B cell (primary cell): ENCODE measurements at regions of chr3 and their contacts with region 1.

Region 1: GRCh38 chr3:50235716-50236496 is at the start of gene GNAI2:
- DNase-seq: peak; percentile 99
- ATAC-seq: peak; percentile 88
- H3K4me3 ChIP-seq: peak within 1 kb of the TSS; percentile 70 to 100 (median 95)
- H3K4me3 Mint-ChIP-seq: peak within 1 kb of the TSS; percentile 97
- H3K27ac ChIP-seq: peak within 1 kb of the TSS; percentile 65 to 91
- H3K27ac Mint-ChIP-seq: peak within 1 kb of the TSS; percentile 97
- H3K4me1 ChIP-seq: peaks cover 39 to 46% of the 10 kb centered on the region in 2 donors
- H3K4me1 Mint-ChIP-seq: peaks cover 54% of the 10 kb centered on the region
- H3K27me3 ChIP-seq: no peaks in the 10 kb centered on the region
- H3K27me3 Mint-ChIP-seq: no peaks in the 10 kb centered on the region
- CTCF ChIP-seq: no peak
- total RNA-seq, gene GNAI2: 295 and 302 TPM in 2 replicates

Region 2: DNA sequence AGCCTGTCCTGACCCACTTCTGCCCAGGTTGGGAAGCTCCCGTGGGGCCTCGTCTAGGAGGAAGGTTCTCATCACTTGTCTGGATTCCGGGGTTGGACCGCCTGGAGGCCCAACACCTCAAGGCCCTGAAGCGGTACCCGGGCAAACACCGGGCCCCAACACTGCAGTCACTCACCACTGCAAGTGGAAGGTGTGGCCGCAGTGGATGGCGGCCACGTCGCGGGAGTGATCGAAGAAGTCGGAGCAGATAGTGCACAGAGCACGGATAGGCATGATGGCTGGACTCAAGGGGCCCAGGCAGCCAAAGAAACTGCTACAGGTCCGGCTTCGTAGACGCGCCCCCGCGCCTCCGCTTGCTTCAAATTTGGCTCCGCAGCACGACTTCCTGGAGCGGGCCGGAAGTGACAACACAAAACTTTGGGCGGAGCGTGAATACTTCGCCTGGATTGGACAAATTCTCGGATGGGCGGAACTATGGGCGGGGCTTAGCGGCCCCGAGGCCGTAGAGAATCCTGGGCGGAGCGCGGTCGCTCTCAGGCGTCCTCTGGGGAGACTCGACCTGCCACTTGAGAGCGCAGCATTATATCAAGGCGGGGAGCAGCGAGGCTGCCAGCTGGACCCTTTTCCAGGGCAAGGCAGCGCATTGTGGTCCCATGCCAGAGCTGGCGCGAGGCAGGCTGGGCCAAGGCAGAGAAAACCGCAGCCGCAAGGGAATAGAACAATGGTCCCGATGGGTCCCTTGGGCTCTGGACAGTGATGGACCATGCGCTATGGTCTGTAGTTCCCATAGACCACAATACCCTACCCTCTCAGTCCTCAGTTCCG is 379.5 kb before region 1 on chr3 and contains the start of gene TRAIP:
- CTCF ChIA-PET with region 1: no interaction called
- POLR2A ChIA-PET with region 1: no interaction called
- intact Hi-C with region 1: loop called (anchors 2 kb)
- DNase-seq: peak; percentile 98
- ATAC-seq: peak; percentile 100
- H3K4me3 ChIP-seq: peak within 1 kb of the TSS; percentile 53 to 91 (median 69)
- H3K4me3 Mint-ChIP-seq: peak within 1 kb of the TSS; percentile 91
- H3K27ac ChIP-seq: peak within 1 kb of the TSS; percentile 56 to 59
- H3K27ac Mint-ChIP-seq: peak within 1 kb of the TSS; percentile 90
- H3K4me1 ChIP-seq: peaks cover 10 to 15% of the 10 kb centered on the region in 2 donors
- H3K4me1 Mint-ChIP-seq: peaks cover 11% of the 10 kb centered on the region
- H3K27me3 ChIP-seq: peaks cover 0 to 3% (median 0%) of the 10 kb centered on the region in 4 experiments
- H3K27me3 Mint-ChIP-seq: no peaks in the 10 kb centered on the region
- CTCF ChIP-seq: no peak
- total RNA-seq, gene TRAIP: 8.7 and 9.9 TPM in 2 replicates

Region 3: DNA sequence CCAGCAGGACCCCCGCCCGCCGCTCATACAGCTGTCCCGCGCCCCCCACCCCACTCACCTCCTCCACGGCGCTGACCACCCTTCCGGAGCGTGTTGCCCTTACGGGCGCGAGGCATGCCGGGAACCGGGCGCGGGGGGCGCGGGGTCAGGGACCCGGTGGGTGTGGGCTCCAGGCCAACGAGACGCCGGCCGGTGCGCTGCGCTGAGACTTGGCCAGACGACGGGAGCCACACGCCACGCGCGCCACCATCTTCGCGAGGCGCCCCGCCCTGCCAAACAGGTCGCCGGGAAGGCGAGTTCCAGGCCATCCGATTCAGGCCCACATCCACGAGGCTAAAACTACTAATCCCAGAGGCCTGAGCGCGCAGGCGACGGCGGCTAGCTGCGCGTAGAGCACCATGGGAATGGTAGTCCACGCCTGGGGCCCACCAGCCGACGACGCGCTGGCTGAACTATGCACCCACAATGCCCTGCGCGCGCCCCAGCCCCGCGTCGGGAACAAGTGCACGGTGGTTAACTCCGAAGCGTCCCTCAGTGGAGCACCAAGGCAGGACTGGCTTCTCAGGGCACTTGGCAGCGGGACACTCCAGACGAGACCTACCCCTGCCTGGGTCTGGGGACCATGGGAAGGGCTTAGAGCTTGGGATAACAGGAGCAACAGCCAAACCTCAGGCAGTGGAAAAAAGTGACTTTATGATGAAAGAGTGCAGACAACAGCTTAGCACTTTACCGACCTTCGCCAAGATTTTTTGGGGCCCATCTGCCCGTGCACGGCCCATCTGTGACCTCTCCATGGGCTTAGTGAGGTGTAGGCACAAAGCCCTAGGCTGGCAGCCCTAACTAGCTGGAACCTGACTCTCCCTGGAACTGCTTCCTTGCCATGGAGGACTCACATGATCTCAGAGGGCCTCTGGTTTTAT is 56.5 kb after region 1 on chr3 and contains the start of gene IFRD2:
- CTCF ChIA-PET with region 1: interaction called, 3 read pairs
- POLR2A ChIA-PET with region 1: interaction called, 5 read pairs
- intact Hi-C with region 1: loop called (anchors 1 kb)
- DNase-seq: peak; percentile 97
- ATAC-seq: peak; percentile 99
- H3K4me3 ChIP-seq: peak within 1 kb of the TSS; percentile 56 to 94 (median 81)
- H3K4me3 Mint-ChIP-seq: peak within 1 kb of the TSS; percentile 92
- H3K27ac ChIP-seq: peak within 1 kb of the TSS; percentile 57 to 85
- H3K27ac Mint-ChIP-seq: peak within 1 kb of the TSS; percentile 96
- H3K4me1 ChIP-seq: peaks cover 11 to 17% of the 10 kb centered on the region in 2 donors
- H3K4me1 Mint-ChIP-seq: peaks cover 17% of the 10 kb centered on the region
- H3K27me3 ChIP-seq: no peaks in the 10 kb centered on the region
- H3K27me3 Mint-ChIP-seq: no peaks in the 10 kb centered on the region
- CTCF ChIP-seq: no peak
- total RNA-seq, gene IFRD2: 55.8 and 63.4 TPM in 2 replicates

Region 4: DNA sequence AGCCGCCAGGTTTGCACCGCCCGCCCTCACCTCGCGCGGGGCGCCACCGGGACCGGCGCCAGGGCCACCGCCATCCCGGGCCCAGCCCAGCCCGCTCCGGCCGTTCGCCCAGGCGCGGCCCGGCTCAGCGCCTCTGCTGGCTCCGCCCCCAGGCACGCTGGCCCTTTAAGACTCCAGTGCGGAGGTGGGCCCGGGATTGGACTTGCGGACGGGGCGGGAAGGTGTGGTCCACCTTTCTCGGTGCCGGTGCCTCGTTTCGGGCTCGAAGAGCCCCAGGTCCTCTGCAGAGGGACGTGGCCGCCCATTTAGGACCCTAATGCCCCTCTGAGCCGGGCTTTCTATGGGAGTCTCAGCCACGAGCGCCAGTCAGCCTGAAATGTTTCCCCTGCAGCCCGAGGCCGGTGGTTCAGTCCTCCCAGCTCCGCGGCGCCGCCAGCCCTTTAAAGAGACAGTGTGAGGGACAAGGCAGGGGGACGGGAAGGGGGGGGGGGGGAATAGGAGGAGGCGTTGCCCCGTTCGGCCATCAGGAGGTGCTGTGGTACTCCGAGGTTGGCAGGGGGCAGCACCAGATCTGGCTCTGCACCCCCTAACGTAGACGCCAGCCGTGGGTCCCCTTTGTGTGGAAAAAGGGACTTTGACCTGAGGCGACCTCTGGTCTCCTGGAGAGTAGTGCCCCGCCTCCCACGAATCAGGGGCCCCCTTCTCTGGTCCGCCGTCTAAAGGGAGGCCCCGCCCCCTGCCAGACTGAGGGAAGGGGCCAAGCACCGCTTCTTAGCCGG is 85.6 kb after region 1 on chr3:
- CTCF ChIA-PET with region 1: interaction called, 3 read pairs
- POLR2A ChIA-PET with region 1: no interaction called
- intact Hi-C with region 1: loop called (anchors 5 kb)
- DNase-seq: peak; percentile 94
- ATAC-seq: peak; percentile 80
- H3K4me3 ChIP-seq: peak overlapping the region; percentile 64 to 95 (median 74)
- H3K4me3 Mint-ChIP-seq: peak overlapping the region; percentile 98
- H3K27ac ChIP-seq: peak overlapping the region; percentile 94 to 96
- H3K27ac Mint-ChIP-seq: peak overlapping the region; percentile 97
- H3K4me1 ChIP-seq: peaks cover 22 to 58% of the 10 kb centered on the region in 2 donors
- H3K4me1 Mint-ChIP-seq: peaks cover 49% of the 10 kb centered on the region
- H3K27me3 ChIP-seq: no peaks in the 10 kb centered on the region
- H3K27me3 Mint-ChIP-seq: no peaks in the 10 kb centered on the region
- CTCF ChIP-seq: peak; percentile 65

Region 5: GRCh38 chr3:50365080-50365841 is 129.4 kb after region 1 on chr3:
- CTCF ChIA-PET with region 1: no interaction called
- POLR2A ChIA-PET with region 1: interaction called, 11 read pairs
- intact Hi-C with region 1: no loop called
- DNase-seq: peak; percentile 95
- ATAC-seq: peak; percentile 97
- H3K4me3 ChIP-seq: peak overlapping the region; percentile 24 to 84 (median 81)
- H3K4me3 Mint-ChIP-seq: peak overlapping the region; percentile 91
- H3K27ac ChIP-seq: peak overlapping the region; percentile 78 to 86
- H3K27ac Mint-ChIP-seq: peak overlapping the region; percentile 94
- H3K4me1 ChIP-seq: peaks cover 13 to 22% of the 10 kb centered on the region in 2 donors
- H3K4me1 Mint-ChIP-seq: peaks cover 21% of the 10 kb centered on the region
- H3K27me3 ChIP-seq: peaks cover 0 to 3% (median 0%) of the 10 kb centered on the region in 4 experiments
- H3K27me3 Mint-ChIP-seq: peaks cover 4% of the 10 kb centered on the region
- CTCF ChIP-seq: no peak